Mammary epithelial cell (primary cell): ENCODE measurements at regions of chr10 and their contacts with region 1.

Region 1: DNA sequence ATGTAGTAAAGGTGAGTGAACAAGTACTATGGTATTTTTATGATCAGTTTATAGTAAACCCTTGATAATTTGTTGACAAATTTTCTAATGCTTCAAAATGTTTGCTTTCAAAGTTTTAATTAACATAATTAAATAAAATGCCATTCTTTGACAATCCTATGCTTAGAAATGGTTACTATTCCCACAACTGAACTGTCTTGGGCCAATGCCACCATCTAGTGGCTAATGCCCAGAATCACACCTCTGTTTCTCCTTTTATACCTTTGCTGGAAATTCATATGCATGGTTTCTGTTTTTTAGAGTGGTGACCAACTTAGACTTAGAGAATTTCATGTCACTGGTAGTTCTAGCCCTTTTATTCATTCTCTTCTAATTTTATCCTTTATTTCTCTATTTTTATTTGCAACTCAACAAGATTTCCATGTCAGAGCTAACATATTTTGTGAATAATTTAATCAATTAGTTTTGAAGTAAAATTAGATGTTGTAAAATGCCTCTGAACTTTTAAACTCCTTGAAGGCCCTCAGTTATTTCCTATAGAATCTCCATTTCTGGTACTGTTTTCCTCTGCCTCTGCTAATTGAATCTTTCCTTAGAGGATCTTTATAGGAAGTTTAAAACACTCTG is 31.1 kb downstream of the PCGF5 start:
- DNase-seq: peak; percentile 35
- H3K4me3 ChIP-seq: no peak overlapping the region
- H3K27ac ChIP-seq: no peak overlapping the region
- H3K4me1 ChIP-seq: no peaks in the 10 kb centered on the region
- H3K27me3 ChIP-seq: no peaks in the 10 kb centered on the region
- CTCF ChIP-seq: peak; percentile 86 to 94

Region 2: DNA sequence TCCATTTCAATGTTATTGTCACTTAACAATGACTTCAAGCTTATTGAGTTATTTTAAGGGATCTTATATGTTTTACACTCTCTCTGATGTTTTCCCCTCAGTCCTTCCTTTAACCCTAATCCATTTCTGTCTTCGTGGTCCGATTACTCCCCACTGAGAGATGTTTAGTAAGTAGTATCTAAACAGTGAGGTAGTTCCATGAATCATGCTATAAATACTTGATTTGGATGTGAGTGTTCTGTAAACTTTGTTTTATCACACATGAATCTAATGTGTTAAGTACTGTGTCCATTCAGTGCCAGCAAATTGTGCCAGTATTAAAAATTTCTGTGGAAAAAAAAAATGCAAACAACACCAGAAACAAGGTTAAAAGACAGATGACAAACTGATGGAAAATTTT is 361.2 kb before region 1 on chr10:
- CTCF ChIA-PET with region 1: no interaction called
- dilution Hi-C with region 1: loop called (anchors 10 kb)
- in situ Hi-C with region 1: no loop called
- intact Hi-C with region 1: no loop called
- DNase-seq: no peak
- H3K4me3 ChIP-seq: no peak overlapping the region
- H3K27ac ChIP-seq: no peak overlapping the region
- H3K4me1 ChIP-seq: no peaks in the 10 kb centered on the region
- H3K27me3 ChIP-seq: no peaks in the 10 kb centered on the region
- CTCF ChIP-seq: no peak

Region 3: DNA sequence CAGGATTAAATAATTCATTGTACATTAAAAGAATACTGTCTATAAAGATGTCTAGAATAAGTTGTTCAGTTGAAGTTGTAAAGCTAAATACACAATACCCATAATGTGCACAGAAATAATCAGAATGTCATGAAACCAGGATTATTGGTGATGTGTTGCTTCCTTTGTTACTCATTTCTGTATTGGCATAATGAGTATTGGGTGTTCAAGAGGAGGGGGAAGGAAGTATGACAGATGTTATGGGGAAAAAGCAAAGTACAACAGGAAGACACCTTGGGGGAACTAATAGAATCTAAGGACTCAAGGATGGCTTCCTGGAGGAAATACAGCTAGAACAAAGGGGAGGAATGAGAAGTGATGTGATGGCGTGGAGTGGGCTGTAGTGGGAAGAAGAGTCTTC is 345.6 kb before region 1 on chr10:
- CTCF ChIA-PET with region 1: no interaction called
- dilution Hi-C with region 1: no loop called
- in situ Hi-C with region 1: loop called (anchors 10 kb)
- intact Hi-C with region 1: no loop called
- DNase-seq: no peak
- H3K4me3 ChIP-seq: no peak overlapping the region
- H3K27ac ChIP-seq: no peak overlapping the region
- H3K4me1 ChIP-seq: no peaks in the 10 kb centered on the region
- H3K27me3 ChIP-seq: no peaks in the 10 kb centered on the region
- CTCF ChIP-seq: no peak

Region 4: GRCh38 chr10:91006001-91006751 is 245.4 kb before region 1 on chr10:
- CTCF ChIA-PET with region 1: no interaction called
- dilution Hi-C with region 1: no loop called
- in situ Hi-C with region 1: loop called in 1 of 2 experiments (anchors 25 kb)
- intact Hi-C with region 1: loop called (anchors 1 kb)
- DNase-seq: peak; percentile 50
- H3K4me3 ChIP-seq: no peak overlapping the region
- H3K27ac ChIP-seq: no peak overlapping the region
- H3K4me1 ChIP-seq: no peaks in the 10 kb centered on the region
- H3K27me3 ChIP-seq: no peaks in the 10 kb centered on the region
- CTCF ChIP-seq: peak; percentile 97 to 99

Region 5: GRCh38 chr10:91043173-91043910 is 208.2 kb before region 1 on chr10:
- CTCF ChIA-PET with region 1: interaction called, 3 read pairs
- dilution Hi-C with region 1: no loop called
- in situ Hi-C with region 1: no loop called
- intact Hi-C with region 1: loop called (anchors 1 kb)
- DNase-seq: peak; percentile 12
- H3K4me3 ChIP-seq: no peak overlapping the region
- H3K27ac ChIP-seq: no peak overlapping the region
- H3K4me1 ChIP-seq: no peaks in the 10 kb centered on the region
- H3K27me3 ChIP-seq: no peaks in the 10 kb centered on the region
- CTCF ChIP-seq: peak; percentile 39 to 58

Region 6: GRCh38 chr10:91088300-91089140 is 163.0 kb before region 1 on chr10:
- CTCF ChIA-PET with region 1: no interaction called
- dilution Hi-C with region 1: no loop called
- in situ Hi-C with region 1: no loop called
- intact Hi-C with region 1: loop called (anchors 1 kb)
- DNase-seq: peak; percentile 4
- H3K4me3 ChIP-seq: no peak overlapping the region
- H3K27ac ChIP-seq: no peak overlapping the region
- H3K4me1 ChIP-seq: no peaks in the 10 kb centered on the region
- H3K27me3 ChIP-seq: no peaks in the 10 kb centered on the region
- CTCF ChIP-seq: peak in 1 of 2 donors; percentile 34